ENCODE measurements at regions of chr5 and their contacts with region 1.

Region 1: DNA sequence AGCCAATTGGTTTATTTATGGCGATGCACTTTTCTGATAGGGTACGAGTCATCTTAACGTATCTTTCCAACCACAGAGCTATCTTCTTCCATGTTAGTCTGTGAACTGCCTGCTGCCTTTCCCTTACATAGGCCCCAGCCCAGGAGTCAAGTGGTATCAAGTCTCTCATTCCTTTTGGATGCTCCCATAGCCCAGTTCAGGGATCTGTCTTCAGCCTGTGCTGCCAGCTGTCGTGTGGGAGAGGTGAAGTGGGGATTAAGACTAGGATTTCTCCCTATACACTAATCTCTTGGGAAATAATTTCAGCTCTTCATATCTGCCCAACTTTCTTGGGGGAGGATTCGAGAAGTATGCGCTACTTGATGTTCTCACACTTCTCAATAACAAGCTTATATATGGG is 475.7 kb downstream of the EBF1 start:
- DNase-seq: no peak
- ATAC-seq: no peak
- H3K4me3 ChIP-seq: no peak overlapping the region
- H3K4me3 Mint-ChIP-seq: no peak overlapping the region
- H3K27ac ChIP-seq: no peak overlapping the region
- H3K27ac Mint-ChIP-seq: no peak overlapping the region
- H3K4me1 ChIP-seq: no peaks in the 10 kb centered on the region
- H3K4me1 Mint-ChIP-seq: no peaks in the 10 kb centered on the region
- H3K27me3 ChIP-seq: no peaks in the 10 kb centered on the region
- H3K27me3 Mint-ChIP-seq: peaks cover 0 to 2% (median 0%) of the 10 kb centered on the region in 5 donors

Region 2: GRCh38 chr5:158634714-158635113 is 10.7 kb after region 1 on chr5:
- CTCF ChIA-PET with region 1: no interaction called
- POLR2A ChIA-PET with region 1: no interaction called
- intact Hi-C with region 1: loop called in 1 of 2 experiments (anchors 1 kb)
- DNase-seq: no peak
- ATAC-seq: no peak
- H3K4me3 ChIP-seq: no peak overlapping the region
- H3K4me3 Mint-ChIP-seq: no peak overlapping the region
- H3K27ac ChIP-seq: no peak overlapping the region
- H3K27ac Mint-ChIP-seq: no peak overlapping the region
- H3K4me1 ChIP-seq: no peaks in the 10 kb centered on the region
- H3K4me1 Mint-ChIP-seq: no peaks in the 10 kb centered on the region
- H3K27me3 ChIP-seq: no peaks in the 10 kb centered on the region
- H3K27me3 Mint-ChIP-seq: peaks cover 0 to 8% (median 0%) of the 10 kb centered on the region in 5 donors

Measured in naive thymus-derived CD4-positive, alpha-beta T cell (primary cell).